ENCODE measurements at regions of chr17 and their contacts with region 1.

Region 1: DNA sequence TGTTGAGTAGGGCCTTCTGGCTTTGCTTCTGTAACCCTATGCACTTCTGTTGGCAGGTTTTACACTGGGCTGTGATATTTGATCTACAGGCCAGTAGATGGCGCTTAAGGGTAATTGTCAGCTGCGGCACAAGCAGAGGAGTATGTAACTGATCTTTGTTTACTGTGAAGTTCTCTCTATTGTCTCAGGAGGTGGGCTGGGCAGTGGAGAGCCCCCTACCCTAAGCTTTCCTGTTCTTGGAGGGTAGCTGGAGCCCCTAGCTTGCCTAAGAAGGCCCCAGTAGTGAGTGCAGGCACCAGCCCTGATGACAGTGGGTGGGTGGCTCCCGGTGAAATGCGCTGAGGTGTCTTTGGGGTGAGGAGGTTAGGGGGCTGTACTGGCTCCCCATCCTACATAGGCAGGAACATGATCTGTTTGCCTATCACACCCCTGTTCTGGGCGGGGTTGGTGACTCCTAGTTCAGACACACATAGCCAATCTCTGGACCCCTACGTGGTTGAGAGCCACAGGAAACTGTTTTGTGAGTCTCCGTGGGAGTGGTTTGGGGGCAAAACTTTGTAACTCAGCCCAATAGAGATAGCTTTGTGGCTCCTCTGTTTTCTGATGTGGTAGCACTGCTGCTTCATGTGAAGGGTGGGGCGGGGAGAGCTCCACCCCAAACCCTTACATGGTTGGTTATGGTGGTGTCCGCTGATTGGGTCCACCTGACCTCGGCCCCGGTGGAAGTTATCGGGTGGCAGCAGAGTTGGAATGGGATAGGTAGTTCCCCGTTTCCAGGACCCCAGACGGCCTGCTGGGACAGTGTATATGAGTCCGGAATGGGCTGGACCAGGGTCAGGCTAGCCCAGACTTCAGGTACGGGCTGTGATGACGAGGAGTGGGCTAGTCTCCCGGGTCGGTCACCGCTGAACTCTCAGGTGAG is 60.4 kb downstream of the SLFN11 start:
- DNase-seq: peak; percentile 53
- ATAC-seq: peak; percentile 89

Region 2: GRCh38 chr17:35046740-35047283 is 266.2 kb before region 1 on chr17:
- intact Hi-C with region 1: no loop called
- DNase-seq: no peak
- ATAC-seq: no peak

Region 3: GRCh38 chr17:35218915-35219314 is 94.1 kb before region 1 on chr17:
- intact Hi-C with region 1: no loop called
- DNase-seq: no peak
- ATAC-seq: no peak

Region 4: DNA sequence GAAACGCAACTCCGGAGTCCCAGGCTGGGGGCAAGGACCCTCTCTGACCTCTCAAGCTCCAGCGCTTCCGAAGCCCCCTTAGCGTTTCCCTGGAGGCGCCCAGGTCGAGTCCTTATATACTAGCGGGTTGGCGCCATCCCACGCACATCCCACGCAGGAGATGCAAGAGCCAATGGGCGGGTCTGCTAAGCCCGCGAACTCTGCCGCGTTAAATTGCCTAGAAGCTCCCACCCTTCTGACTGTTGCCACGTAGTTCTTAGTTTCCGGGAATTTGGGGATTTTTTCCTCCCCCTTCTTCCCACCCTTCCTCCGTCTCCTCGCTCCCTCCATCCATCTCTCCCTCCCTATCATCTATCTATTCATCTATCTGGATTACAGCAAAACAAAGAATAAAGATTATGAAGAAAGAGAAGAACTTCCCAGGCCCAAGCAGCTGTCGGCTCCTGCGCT is 60.5 kb after region 1 on chr17 and contains the start of gene SLFN11:
- intact Hi-C with region 1: loop called (anchors 5 kb)
- DNase-seq: peak; percentile 89
- ATAC-seq: peak; percentile 97
- total RNA-seq, gene SLFN11: 18.2 TPM

Region 5: GRCh38 chr17:35537601-35538141 is 224.6 kb after region 1 on chr17 and contains the start of gene SLFN12L:
- intact Hi-C with region 1: loop called (anchors 5 kb)
- DNase-seq: no peak
- ATAC-seq: peak; percentile 43
- total RNA-seq, gene SLFN12L: 0.32 TPM

Measured in left ventricle myocardium superior (tissue), 1 donor.